H1 (cell line): ENCODE measurements at regions of chr9 and their contacts with region 1.

Region 1: DNA sequence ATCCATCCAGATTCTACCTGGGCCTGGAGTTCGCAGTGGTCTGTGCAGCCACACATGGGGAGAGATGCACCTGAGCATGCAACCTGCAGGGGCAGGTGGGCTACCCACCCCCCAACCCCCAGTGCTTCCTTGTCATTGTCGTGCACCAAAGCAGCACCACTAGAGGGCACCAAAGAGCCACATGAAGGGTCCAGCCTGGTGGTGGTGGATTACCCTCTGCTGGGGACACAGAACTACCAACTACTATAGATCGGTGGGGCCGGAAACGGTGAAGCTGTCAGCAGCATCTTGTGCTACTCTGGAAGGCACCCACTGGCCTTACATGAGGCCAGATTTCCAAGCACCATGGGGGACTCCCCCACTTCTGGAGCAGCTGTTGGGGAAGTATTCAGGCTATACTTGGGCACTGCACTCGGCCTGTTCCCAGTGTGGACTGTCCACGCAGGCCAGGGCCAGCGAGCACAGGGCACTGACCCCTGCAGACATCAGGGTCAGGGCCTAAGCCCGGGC is 60.2 kb upstream of the TBC1D2 start:
- DNase-seq: peak; percentile 72 to 97
- H3K4me3 ChIP-seq: no peak overlapping the region
- H3K27ac ChIP-seq: no peak overlapping the region
- H3K4me1 ChIP-seq: peaks cover 0 to 9% (median 7%) of the 10 kb centered on the region in 4 experiments; a peak in 5 of 7 replicates
- H3K27me3 ChIP-seq: no peaks in the 10 kb centered on the region
- CTCF ChIP-seq: peak; percentile 87 to 99 (median 99)
- EP300 ChIP-seq: peak in 1 of 2 experiments; percentile 47; a peak in 1 of 3 replicates
- POLR2A ChIP-seq: no peak
- RAD21 ChIP-seq: peak; percentile 99 to 100

Region 2: DNA sequence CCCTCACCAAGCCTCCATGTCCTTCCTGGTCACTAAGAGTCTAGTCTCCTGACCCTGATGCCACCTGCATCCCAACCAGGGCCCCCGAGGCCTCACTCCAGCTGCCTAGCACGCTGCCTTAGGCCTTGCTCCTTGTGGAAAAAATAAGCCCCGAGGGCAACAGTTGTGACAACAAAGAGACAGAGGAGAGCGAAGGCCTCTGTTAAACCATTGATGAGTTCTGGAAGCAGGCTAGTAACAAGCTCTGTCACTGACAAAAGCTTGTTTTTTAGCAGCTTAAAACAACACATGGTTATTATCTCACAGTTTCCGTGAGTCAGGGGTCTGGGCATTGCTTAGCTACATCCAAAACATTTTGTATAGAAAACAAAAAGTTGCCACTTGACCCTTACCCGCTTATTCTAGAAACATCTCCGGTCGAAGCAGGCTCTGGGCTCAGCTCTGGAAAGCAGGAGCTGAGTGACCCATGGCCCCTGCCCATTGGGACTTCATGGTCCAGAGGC is 11.9 kb before region 1 on chr9:
- CTCF ChIA-PET with region 1: interaction called, 11 read pairs
- POLR2A ChIA-PET with region 1: no interaction called
- DNase-seq: no peak
- H3K4me3 ChIP-seq: no peak overlapping the region
- H3K27ac ChIP-seq: no peak overlapping the region
- H3K4me1 ChIP-seq: no peaks in the 10 kb centered on the region; a peak in 1 of 7 replicates
- H3K27me3 ChIP-seq: peaks cover 0 to 2% (median 0%) of the 10 kb centered on the region in 4 experiments; a peak in 1 of 7 replicates
- CTCF ChIP-seq: no peak
- EP300 ChIP-seq: no peak
- POLR2A ChIP-seq: no peak
- RAD21 ChIP-seq: no peak

Region 3: DNA sequence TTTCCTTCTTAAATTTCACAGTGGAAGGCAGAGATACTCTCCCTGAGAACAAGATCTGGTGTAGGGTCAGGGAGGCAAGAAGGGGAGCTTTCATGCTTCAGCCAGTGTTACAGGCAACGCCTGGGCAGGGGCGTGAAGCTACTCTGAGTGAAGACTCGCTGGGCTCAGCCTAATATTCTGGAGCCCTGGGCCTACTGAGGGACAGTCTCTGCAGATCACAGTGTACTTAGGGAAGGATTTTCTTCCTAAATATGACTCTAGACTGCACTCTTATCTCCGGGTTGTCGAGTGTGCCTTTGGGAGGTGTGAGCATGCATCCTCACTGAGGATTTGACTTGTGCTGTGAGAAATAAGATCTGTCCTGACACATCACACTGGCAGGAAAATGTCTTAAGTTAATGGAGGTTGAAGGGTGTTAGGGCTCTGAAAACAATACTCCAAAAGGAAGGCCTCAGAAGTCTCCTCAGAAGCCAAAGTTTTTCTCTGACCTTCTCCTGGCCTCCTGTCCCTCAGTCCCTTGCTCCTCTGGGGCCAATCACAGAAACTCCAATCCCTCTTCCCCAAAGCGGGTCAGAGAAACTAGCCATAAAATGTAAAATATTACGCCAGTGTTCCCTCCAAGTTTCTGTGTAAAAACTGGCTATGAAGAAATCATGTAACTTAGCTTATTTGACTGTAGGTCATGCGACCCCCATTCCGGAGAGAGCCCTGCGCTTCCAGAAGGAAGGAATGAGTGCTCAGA is 96.7 kb after region 1 on chr9:
- CTCF ChIA-PET with region 1: interaction called, 10 read pairs
- POLR2A ChIA-PET with region 1: no interaction called
- DNase-seq: no peak
- H3K4me3 ChIP-seq: no peak overlapping the region
- H3K27ac ChIP-seq: no peak overlapping the region
- H3K4me1 ChIP-seq: peaks cover 0 to 7% (median 4%) of the 10 kb centered on the region in 4 experiments; a peak in 5 of 7 replicates
- H3K27me3 ChIP-seq: no peaks in the 10 kb centered on the region
- CTCF ChIP-seq: no peak
- EP300 ChIP-seq: no peak
- POLR2A ChIP-seq: no peak
- RAD21 ChIP-seq: no peak

Region 4: GRCh38 chr9:98707166-98708102 is 391.8 kb after region 1 on chr9:
- CTCF ChIA-PET with region 1: interaction called, 10 read pairs
- POLR2A ChIA-PET with region 1: no interaction called
- DNase-seq: peak; percentile 73 to 86
- H3K4me3 ChIP-seq: peak overlapping the region in 3 of 4 experiments; percentile 29 to 55 (median 52); a peak in 6 of 8 replicates
- H3K27ac ChIP-seq: no peak overlapping the region
- H3K4me1 ChIP-seq: peaks cover 0 to 11% (median 5%) of the 10 kb centered on the region in 4 experiments; a peak in 5 of 7 replicates
- H3K27me3 ChIP-seq: peaks cover 44 to 70% (median 61%) of the 10 kb centered on the region in 4 experiments
- CTCF ChIP-seq: peak; percentile 86 to 89 (median 87)
- EP300 ChIP-seq: no peak
- POLR2A ChIP-seq: no peak
- RAD21 ChIP-seq: peak; percentile 85 to 91